HepG2 (cell line): ENCODE measurements at regions of chr2 and their contacts with region 1.

Region 1: DNA sequence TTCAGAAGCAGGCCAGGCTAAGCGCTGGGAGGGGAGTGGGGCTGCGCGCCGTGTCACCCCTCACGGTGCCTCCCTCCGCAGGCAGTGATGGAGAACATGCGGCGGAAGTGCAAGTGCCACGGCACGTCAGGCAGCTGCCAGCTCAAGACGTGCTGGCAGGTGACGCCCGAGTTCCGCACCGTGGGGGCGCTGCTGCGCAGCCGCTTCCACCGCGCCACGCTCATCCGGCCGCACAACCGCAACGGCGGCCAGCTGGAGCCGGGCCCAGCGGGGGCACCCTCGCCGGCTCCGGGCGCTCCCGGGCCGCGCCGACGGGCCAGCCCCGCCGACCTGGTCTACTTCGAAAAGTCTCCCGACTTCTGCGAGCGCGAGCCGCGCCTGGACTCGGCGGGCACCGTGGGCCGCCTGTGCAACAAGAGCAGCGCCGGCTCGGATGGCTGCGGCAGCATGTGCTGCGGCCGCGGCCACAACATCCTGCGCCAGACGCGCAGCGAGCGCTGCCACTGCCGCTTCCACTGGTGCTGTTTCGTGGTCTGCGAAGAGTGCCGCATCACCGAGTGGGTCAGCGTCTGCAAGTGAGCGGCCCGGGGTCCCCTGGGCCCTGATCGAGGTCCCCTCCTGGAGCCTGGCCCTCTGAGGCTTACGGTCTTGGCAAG is 12.2 kb downstream of the WNT10A start:
- DNase-seq: peak; percentile 32
- ATAC-seq: peak; percentile 86
- H3K4me3 ChIP-seq: peak overlapping the region; percentile 36 to 65 (median 50); a peak in 4 of 6 replicates
- H3K27ac ChIP-seq: no peak overlapping the region
- H3K4me1 ChIP-seq: peaks cover 44% of the 10 kb centered on the region
- H3K27me3 ChIP-seq: peaks cover 33 to 89% of the 10 kb centered on the region in 2 experiments; a peak in 4 of 5 replicates
- CTCF ChIP-seq: peak; percentile 88
- EP300 ChIP-seq: no peak
- POLR2A ChIP-seq: no peak
- RAD21 ChIP-seq: peak; percentile 74

Region 2: GRCh38 chr2:218944759-218945404 is 52.1 kb after region 1 on chr2:
- CTCF ChIA-PET with region 1: no interaction called
- POLR2A ChIA-PET with region 1: no interaction called
- in situ Hi-C with region 1: no loop called
- intact Hi-C with region 1: loop called (anchors 1 kb)
- DNase-seq: no peak
- ATAC-seq: no peak
- H3K4me3 ChIP-seq: no peak overlapping the region
- H3K27ac ChIP-seq: no peak overlapping the region
- H3K4me1 ChIP-seq: no peaks in the 10 kb centered on the region
- H3K27me3 ChIP-seq: peaks cover 1 to 46% of the 10 kb centered on the region in 2 experiments; a peak in 4 of 5 replicates
- CTCF ChIP-seq: no peak
- EP300 ChIP-seq: no peak
- POLR2A ChIP-seq: no peak
- RAD21 ChIP-seq: no peak